HepG2 (cell line): ENCODE measurements at regions of chr2 and their contacts with region 1.

Region 1: DNA sequence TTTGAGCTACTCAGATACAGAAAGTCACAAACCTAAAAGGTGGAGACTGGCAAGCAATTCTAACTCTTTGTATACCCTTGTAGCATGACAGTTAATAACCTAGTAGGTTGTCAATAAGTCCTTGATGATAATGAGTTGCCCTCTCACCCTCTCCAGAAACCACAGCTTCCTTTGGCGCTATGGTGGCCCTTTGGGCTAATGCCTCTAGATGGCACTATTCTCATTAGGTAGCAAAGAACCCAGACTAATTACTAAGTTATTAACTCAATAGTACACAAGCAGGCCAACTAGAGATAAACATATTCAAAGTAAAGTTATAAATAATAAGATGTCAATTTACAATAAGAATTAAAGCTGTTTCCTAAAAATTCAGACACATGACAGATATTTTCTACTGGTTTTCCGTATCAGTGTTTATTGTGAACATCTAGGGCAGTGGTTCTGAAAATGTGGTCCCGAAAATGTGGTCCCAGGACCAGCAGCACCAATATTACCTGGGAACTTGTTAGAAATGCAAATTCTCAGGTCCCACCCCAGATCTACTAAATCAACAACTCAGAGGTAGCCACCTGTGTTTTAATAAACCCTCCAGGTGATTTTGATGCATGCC is 41.1 kb downstream of the LDAH start:
- DNase-seq: peak; percentile 51
- ATAC-seq: peak; percentile 92
- H3K4me3 ChIP-seq: no peak overlapping the region
- H3K27ac ChIP-seq: no peak overlapping the region
- H3K4me1 ChIP-seq: no peaks in the 10 kb centered on the region
- H3K27me3 ChIP-seq: no peaks in the 10 kb centered on the region
- CTCF ChIP-seq: peak; percentile 80
- EP300 ChIP-seq: no peak
- POLR2A ChIP-seq: no peak
- RAD21 ChIP-seq: peak; percentile 78

Region 2: GRCh38 chr2:20916604-20917286 is 135.0 kb after region 1 on chr2:
- CTCF ChIA-PET with region 1: interaction called, 6 read pairs
- POLR2A ChIA-PET with region 1: no interaction called
- in situ Hi-C with region 1: no loop called
- intact Hi-C with region 1: loop called (anchors 1 kb)
- DNase-seq: peak; percentile 74
- ATAC-seq: peak; percentile 94
- H3K4me3 ChIP-seq: peak overlapping the region in 1 of 3 experiments; percentile 31; a peak in 2 of 6 replicates
- H3K27ac ChIP-seq: no peak overlapping the region
- H3K4me1 ChIP-seq: peaks cover 14% of the 10 kb centered on the region
- H3K27me3 ChIP-seq: peaks cover 0 to 22% of the 10 kb centered on the region in 2 experiments; a peak in 4 of 5 replicates
- CTCF ChIP-seq: peak; percentile 88
- EP300 ChIP-seq: no peak
- POLR2A ChIP-seq: no peak
- RAD21 ChIP-seq: peak; percentile 70

Region 3: GRCh38 chr2:21165350-21165749 is 383.6 kb after region 1 on chr2:
- CTCF ChIA-PET with region 1: interaction called, 5 read pairs
- POLR2A ChIA-PET with region 1: no interaction called
- in situ Hi-C with region 1: loop called (anchors 25 kb)
- intact Hi-C with region 1: loop called (anchors 1 kb)
- DNase-seq: peak; percentile 42
- ATAC-seq: 0 out of 3 replicates have a peak, but pooled peaks have one; percentile 36
- H3K4me3 ChIP-seq: no peak overlapping the region
- H3K27ac ChIP-seq: no peak overlapping the region
- H3K4me1 ChIP-seq: no peaks in the 10 kb centered on the region
- H3K27me3 ChIP-seq: no peaks in the 10 kb centered on the region
- CTCF ChIP-seq: peak; percentile 57
- EP300 ChIP-seq: no peak
- POLR2A ChIP-seq: no peak
- RAD21 ChIP-seq: peak; percentile 40; the same call in 1 of the 2 replicates

Region 4: GRCh38 chr2:21317131-21317530 is 535.4 kb after region 1 on chr2:
- CTCF ChIA-PET with region 1: no interaction called
- POLR2A ChIA-PET with region 1: no interaction called
- in situ Hi-C with region 1: no loop called
- intact Hi-C with region 1: loop called (anchors 2 kb)
- DNase-seq: peak; percentile 60
- ATAC-seq: peak; percentile 92
- H3K4me3 ChIP-seq: no peak overlapping the region
- H3K27ac ChIP-seq: no peak overlapping the region
- H3K4me1 ChIP-seq: no peaks in the 10 kb centered on the region
- H3K27me3 ChIP-seq: peaks cover 0 to 10% of the 10 kb centered on the region in 2 experiments; a peak in 3 of 5 replicates
- CTCF ChIP-seq: peak; percentile 73
- EP300 ChIP-seq: no peak
- POLR2A ChIP-seq: no peak
- RAD21 ChIP-seq: peak; percentile 42; the same call in 1 of the 2 replicates